ENCODE measurements at regions of chr16 and their contacts with region 1.

Region 1: GRCh38 chr16:68074850-68075555 is 10.2 kb upstream of the NFATC3 start:
- DNase-seq: no peak
- ATAC-seq: no peak
- H3K4me3 ChIP-seq: no peak overlapping the region
- H3K27ac ChIP-seq: peak overlapping the region; percentile 8
- H3K4me1 ChIP-seq: peaks cover 40% of the 10 kb centered on the region
- H3K27me3 ChIP-seq: no peaks in the 10 kb centered on the region
- CTCF ChIP-seq: no peak
- EP300 ChIP-seq: no peak
- POLR2A ChIP-seq: no peak
- RAD21 ChIP-seq: no peak

Region 2: DNA sequence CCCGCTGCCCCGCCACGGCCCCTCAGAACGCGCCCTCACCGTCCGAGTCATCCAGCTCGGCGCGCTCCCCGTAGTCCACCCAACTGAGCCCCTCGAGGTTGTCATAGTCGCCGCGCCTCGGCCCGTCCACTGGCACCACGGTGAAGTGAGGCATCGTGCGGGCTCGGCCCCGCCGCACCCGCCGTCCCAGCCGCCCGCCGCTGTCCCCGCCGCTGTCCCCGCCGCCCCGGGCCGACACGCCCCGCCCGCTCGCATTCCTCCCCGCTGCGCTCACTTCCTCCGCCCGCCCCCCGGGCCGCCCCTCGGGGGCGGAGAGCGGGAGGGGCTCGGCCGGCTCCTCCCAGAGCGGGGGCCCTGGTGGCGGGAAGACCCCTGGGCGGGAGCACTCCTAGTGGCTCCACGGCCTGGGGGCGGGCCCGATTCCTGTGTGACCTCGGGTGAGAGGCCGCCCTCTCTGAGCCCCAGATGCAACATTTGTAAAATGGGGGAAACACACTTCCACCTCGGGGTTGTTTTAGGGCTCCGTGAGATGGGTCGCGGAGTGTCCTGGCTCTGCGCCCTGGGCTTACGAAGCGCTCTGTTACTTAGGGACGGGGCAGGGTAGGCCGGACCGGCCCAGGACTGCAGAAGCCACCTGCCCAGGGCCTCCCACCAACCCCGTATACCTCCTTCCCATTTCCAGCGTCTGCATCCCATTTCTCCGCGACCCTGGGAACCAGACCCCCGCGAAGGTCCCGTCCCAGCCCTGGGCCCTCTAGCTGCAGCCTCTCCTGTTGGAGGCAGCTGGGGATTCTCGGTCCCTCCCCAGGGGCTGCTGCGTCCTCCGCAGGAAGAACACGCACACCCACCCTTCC is 106.4 kb before region 1 on chr16 and contains the start of gene SLC12A4:
- CTCF ChIA-PET with region 1: no interaction called
- POLR2A ChIA-PET with region 1: interaction called, 10 read pairs
- in situ Hi-C with region 1: no loop called
- intact Hi-C with region 1: no loop called
- DNase-seq: peak; percentile 86
- ATAC-seq: peak; percentile 73
- H3K4me3 ChIP-seq: peak within 1 kb of the TSS; percentile 89 to 91 (median 90)
- H3K27ac ChIP-seq: peak within 1 kb of the TSS; percentile 92
- H3K4me1 ChIP-seq: peaks cover 57% of the 10 kb centered on the region
- H3K27me3 ChIP-seq: no peaks in the 10 kb centered on the region; a peak in 1 of 5 replicates
- CTCF ChIP-seq: peak; percentile 13; the same call in 1 of the 2 replicates
- EP300 ChIP-seq: peak in 1 of 2 experiments; percentile 73; a peak in 1 of 4 replicates
- POLR2A ChIP-seq: peak; percentile 66 to 81
- RAD21 ChIP-seq: peak; percentile 5; the same call in 1 of the 2 replicates
- total RNA-seq, gene SLC12A4: 23.1 and 65.1 TPM in 2 replicates

Region 3: GRCh38 chr16:68049449-68049848 is 25.6 kb before region 1 on chr16:
- CTCF ChIA-PET with region 1: no interaction called
- POLR2A ChIA-PET with region 1: interaction called, 27 read pairs
- in situ Hi-C with region 1: no loop called
- intact Hi-C with region 1: no loop called
- DNase-seq: no peak
- ATAC-seq: no peak
- H3K4me3 ChIP-seq: no peak overlapping the region
- H3K27ac ChIP-seq: no peak overlapping the region
- H3K4me1 ChIP-seq: peaks cover 21% of the 10 kb centered on the region
- H3K27me3 ChIP-seq: no peaks in the 10 kb centered on the region
- CTCF ChIP-seq: no peak
- EP300 ChIP-seq: no peak
- POLR2A ChIP-seq: no peak
- RAD21 ChIP-seq: no peak

Region 4: DNA sequence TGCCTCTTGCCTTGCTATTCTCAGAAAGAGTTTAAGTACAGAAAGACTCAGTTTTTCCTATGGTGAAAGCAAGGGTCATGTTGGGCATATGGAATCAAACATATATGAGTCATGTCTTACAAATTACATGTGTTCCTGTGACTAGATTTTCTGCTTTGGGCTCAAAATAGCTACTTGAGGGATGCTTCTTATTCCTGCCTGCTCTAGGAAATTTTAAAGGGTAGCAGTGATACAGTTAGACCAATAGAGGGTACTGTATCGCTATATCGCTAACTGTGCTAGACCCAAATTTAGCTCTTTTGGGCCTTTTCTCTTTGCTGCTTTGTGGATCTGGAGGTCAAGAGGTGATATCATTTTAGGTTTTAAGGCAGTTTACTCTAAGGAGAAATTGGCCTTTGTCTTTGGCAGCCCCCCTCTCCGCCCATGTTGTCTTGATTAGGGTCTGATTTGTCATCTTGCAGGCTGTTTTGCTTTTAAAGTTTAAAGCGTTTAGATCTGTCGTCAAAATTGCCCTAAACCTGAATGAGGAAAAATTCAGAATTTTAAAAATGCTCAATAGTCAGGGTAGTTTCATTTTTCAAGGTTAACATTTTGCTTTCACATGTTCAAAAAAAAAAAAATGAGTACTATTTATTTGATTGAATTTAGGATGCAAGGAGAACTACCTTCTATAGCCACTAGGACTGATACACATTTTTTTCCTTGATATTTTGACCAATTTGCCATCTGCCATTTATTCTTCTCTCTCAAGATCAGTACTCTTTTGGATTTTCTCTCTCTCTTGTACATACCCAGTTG is 19.0 kb after region 1 on chr16:
- CTCF ChIA-PET with region 1: no interaction called
- POLR2A ChIA-PET with region 1: interaction called, 13 read pairs
- in situ Hi-C with region 1: no loop called
- intact Hi-C with region 1: no loop called
- DNase-seq: no peak
- ATAC-seq: peak; percentile 67
- H3K4me3 ChIP-seq: no peak overlapping the region
- H3K27ac ChIP-seq: no peak overlapping the region
- H3K4me1 ChIP-seq: peaks cover 92% of the 10 kb centered on the region
- H3K27me3 ChIP-seq: no peaks in the 10 kb centered on the region
- CTCF ChIP-seq: peak; percentile 76
- EP300 ChIP-seq: no peak
- POLR2A ChIP-seq: no peak
- RAD21 ChIP-seq: peak; percentile 51

Region 5: GRCh38 chr16:68237243-68238028 is 162.4 kb after region 1 on chr16:
- CTCF ChIA-PET with region 1: no interaction called
- POLR2A ChIA-PET with region 1: interaction called, 57 read pairs
- in situ Hi-C with region 1: loop called (anchors 10 kb)
- intact Hi-C with region 1: no loop called
- DNase-seq: peak; percentile 98
- ATAC-seq: peak; percentile 71
- H3K4me3 ChIP-seq: peak overlapping the region; percentile 66 to 94 (median 93)
- H3K27ac ChIP-seq: peak overlapping the region; percentile 85
- H3K4me1 ChIP-seq: peaks cover 38% of the 10 kb centered on the region
- H3K27me3 ChIP-seq: no peaks in the 10 kb centered on the region; a peak in 1 of 5 replicates
- CTCF ChIP-seq: peak; percentile 10; the same call in 1 of the 2 replicates
- EP300 ChIP-seq: peak; percentile 77 to 92
- POLR2A ChIP-seq: peak in 1 of 2 experiments; percentile 91; a peak in 2 of 4 replicates
- RAD21 ChIP-seq: peak; percentile 28; the same call in 1 of the 2 replicates

Region 6: GRCh38 chr16:68264128-68265077 is 189.4 kb after region 1 on chr16 and contains the start of gene SLC7A6:
- CTCF ChIA-PET with region 1: no interaction called
- POLR2A ChIA-PET with region 1: interaction called, 11 read pairs
- in situ Hi-C with region 1: no loop called
- intact Hi-C with region 1: no loop called
- DNase-seq: peak; percentile 60
- ATAC-seq: peak; percentile 60
- H3K4me3 ChIP-seq: peak within 1 kb of the TSS; percentile 69 to 100 (median 97)
- H3K27ac ChIP-seq: peak within 1 kb of the TSS; percentile 97
- H3K4me1 ChIP-seq: peaks cover 60% of the 10 kb centered on the region
- H3K27me3 ChIP-seq: no peaks in the 10 kb centered on the region; a peak in 1 of 5 replicates
- CTCF ChIP-seq: peak; percentile 95
- EP300 ChIP-seq: 0 out of 4 replicates have a peak, but pooled peaks of 1 of the 2 experiments have one; percentile 39
- POLR2A ChIP-seq: no peak; a peak in 1 of 4 replicates
- RAD21 ChIP-seq: peak; percentile 86
- total RNA-seq, gene SLC7A6: 25.4 and 35.8 TPM in 2 replicates